Spleen (tissue), 13 donors: ENCODE measurements at regions of chr4 and their contacts with region 1.

Region 1: DNA sequence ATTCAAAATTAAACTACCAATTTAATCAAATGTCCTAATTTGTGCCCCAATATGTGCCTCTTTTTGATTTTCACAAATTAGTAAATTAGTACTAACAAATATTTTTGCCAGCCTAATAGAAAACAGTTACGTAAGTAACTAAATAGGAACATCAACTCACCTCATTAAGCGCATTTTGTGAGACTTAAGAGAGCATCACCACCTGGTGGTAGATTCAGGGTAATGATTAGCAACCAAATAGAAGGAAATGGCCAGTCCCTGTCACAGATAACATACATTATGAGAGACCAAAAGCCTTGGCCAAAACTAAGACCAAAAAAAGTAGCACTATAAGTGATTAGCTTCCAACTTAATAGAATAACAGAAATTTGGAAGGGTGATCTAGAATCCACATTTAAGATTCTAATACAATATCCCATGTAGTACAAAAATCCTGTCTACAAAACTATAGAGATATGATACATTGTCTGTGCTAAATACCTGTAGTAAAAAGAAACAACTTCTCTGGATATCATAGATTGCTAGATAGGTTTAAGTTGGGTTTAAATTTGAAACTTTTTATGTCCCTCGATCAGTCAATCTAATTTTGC is 46.7 kb downstream of the C4orf46 start:
- DNase-seq: no peak
- H3K4me3 ChIP-seq: no peak overlapping the region
- H3K27ac ChIP-seq: no peak overlapping the region
- H3K4me1 ChIP-seq: peaks cover 0 to 3% (median 0%) of the 10 kb centered on the region in 6 donors
- H3K27me3 ChIP-seq: peaks cover 0 to 5% (median 0%) of the 10 kb centered on the region in 7 donors
- CTCF ChIP-seq: peak in 10 of 11 experiments; percentile 17 to 76 (median 68)
- POLR2A ChIP-seq: no peak

Region 2: DNA sequence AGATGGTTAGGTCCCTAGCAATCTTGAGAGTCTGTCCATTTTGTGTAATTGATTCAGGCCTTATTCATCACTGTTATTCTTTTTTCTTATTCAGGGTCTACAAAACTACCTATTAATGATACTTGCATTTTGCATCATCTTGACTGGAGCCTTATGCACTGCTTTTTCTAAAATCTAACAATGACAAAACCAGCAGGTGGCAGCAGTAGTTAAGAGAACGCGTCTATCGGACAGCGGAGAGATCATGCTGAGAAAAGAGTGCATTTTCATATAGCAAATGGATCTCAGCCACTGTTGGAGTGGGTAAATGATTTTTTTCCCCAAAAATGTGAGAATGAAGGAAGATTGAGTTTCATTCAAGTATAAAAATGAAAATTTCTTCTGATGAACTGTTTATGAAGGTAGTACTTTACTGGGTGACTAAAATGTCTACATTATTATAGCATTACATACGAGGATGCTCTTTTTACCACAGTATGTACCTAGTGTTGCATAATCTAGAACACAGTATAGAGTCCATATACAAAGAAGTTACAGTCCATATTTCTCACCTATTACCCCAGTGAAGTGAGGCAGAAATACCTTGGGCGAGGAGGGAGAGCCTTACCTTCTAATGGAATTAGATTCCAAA is 371.5 kb before region 1 on chr4:
- intact Hi-C with region 1: loop called (anchors 10 kb)
- DNase-seq: no peak
- H3K4me3 ChIP-seq: no peak overlapping the region
- H3K27ac ChIP-seq: no peak overlapping the region
- H3K4me1 ChIP-seq: peaks cover 0 to 8% (median 0%) of the 10 kb centered on the region in 6 donors
- H3K27me3 ChIP-seq: no peaks in the 10 kb centered on the region
- CTCF ChIP-seq: peak in 9 of 11 experiments; percentile 8 to 58 (median 38)
- POLR2A ChIP-seq: no peak

Region 3: DNA sequence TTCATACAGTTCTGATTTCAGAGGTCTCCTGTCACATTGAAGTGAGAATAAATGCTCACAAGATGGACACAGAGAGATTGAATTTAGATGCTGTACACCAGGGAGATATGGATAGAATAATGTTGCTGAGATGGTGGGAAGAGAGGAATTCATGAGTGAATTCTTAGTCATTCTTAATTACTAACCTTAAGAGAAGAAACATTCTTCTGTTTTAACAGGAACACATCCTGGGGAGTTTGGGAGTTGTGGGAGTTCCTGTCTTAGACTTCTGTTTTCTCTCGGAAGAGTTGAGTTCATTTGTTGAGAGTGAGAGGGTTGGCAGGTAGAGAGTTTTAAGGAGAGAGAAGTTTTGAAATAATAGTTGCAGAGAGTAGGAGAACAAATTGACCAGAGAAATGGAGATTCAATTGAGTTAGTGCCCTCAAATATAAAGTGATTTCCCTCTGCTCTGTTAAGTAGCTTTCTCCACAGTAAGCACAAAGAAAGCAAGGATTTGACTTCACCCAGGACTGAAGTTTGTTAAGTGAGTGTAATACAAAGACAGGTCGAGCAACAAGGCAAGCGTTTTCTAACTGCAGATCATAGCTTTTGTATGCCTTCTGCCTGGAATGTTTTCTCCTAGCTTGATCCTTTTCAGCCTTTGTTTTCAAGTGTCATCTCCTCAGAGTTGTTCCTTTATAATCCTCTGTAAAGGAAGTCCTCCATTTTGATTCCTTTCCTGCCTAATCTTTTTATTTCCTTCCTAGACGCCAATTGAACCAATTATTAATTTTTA is 683.8 kb after region 1 on chr4:
- intact Hi-C with region 1: no loop called
- DNase-seq: no peak
- H3K4me3 ChIP-seq: no peak overlapping the region
- H3K27ac ChIP-seq: peak overlapping the region in 6 of 8 donors; percentile 3 to 43 (median 20)
- H3K4me1 ChIP-seq: peaks cover 0 to 19% (median 0%) of the 10 kb centered on the region in 6 donors
- H3K27me3 ChIP-seq: no peaks in the 10 kb centered on the region
- CTCF ChIP-seq: no peak
- POLR2A ChIP-seq: no peak